CD4-positive, alpha-beta T cell (primary cell): ENCODE measurements at regions of chr19 and their contacts with region 1.

Region 1: DNA sequence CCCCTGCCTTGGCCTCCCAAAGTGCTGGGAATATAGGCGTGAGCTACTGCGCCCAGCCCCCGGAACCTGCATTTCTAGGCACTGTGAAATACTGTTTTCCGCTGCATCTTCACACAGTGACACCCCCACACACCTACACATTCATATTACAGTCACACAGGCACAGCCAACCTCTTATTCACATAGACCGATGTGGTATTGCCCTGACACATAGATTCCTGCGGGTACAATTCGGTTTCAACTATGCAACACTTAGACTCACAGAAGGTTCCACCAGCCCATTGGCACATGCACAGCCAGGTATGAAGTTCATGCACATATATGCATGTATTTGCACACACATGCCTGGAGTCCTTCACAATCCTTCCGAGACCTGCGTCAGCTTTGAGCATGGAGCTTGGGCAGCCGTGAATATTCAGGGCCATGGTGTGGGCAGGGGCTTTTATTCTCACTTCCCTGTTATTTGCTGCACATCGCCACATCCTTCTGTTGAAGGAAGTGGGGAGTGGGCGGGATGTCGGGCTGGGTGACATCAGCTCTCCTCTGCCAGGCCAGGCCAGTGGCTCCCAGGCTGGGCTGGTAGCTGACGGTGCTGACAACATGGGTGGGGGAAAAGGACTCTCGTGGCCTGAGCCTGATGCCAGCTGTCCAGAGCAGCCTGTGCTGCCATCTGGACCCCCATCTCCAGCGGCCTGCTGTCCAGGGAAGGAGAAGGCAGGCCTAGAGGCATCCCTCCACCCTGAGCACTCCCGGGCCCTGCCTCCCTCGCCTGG is 5.4 kb upstream of the CDC37 start:
- DNase-seq: peak in 7 of 14 experiments; percentile 38 to 89 (median 67)
- ATAC-seq: peak; percentile 42
- H3K4me3 ChIP-seq: peak overlapping the region; percentile 26
- H3K4me3 Mint-ChIP-seq: peak overlapping the region; percentile 76
- H3K27ac ChIP-seq: peak overlapping the region; percentile 36 to 37
- H3K27ac Mint-ChIP-seq: peak overlapping the region; percentile 85
- H3K4me1 ChIP-seq: peaks cover 80% of the 10 kb centered on the region
- H3K4me1 Mint-ChIP-seq: peaks cover 61% of the 10 kb centered on the region
- H3K27me3 ChIP-seq: no peaks in the 10 kb centered on the region
- H3K27me3 Mint-ChIP-seq: peaks cover 1% of the 10 kb centered on the region
- CTCF ChIP-seq: no peak

Region 2: GRCh38 chr19:9945319-9945966 is 463.3 kb before region 1 on chr19:
- CTCF ChIA-PET with region 1: no interaction called
- POLR2A ChIA-PET with region 1: no interaction called
- intact Hi-C with region 1: no loop called
- DNase-seq: no peak
- ATAC-seq: no peak
- H3K4me3 ChIP-seq: no peak overlapping the region
- H3K4me3 Mint-ChIP-seq: no peak overlapping the region
- H3K27ac ChIP-seq: no peak overlapping the region
- H3K27ac Mint-ChIP-seq: no peak overlapping the region
- H3K4me1 ChIP-seq: no peaks in the 10 kb centered on the region
- H3K4me1 Mint-ChIP-seq: no peaks in the 10 kb centered on the region
- H3K27me3 ChIP-seq: peaks cover 3 to 15% of the 10 kb centered on the region in 2 experiments
- H3K27me3 Mint-ChIP-seq: peaks cover 41% of the 10 kb centered on the region
- CTCF ChIP-seq: no peak

Region 3: GRCh38 chr19:10295305-10295846 is 113.3 kb before region 1 on chr19:
- CTCF ChIA-PET with region 1: no interaction called
- POLR2A ChIA-PET with region 1: no interaction called
- intact Hi-C with region 1: no loop called
- DNase-seq: peak; percentile 44 to 89 (median 64)
- ATAC-seq: peak; percentile 71
- H3K4me3 ChIP-seq: peak overlapping the region; percentile 57
- H3K4me3 Mint-ChIP-seq: peak overlapping the region; percentile 81
- H3K27ac ChIP-seq: no peak overlapping the region
- H3K27ac Mint-ChIP-seq: no peak overlapping the region
- H3K4me1 ChIP-seq: peaks cover 58% of the 10 kb centered on the region
- H3K4me1 Mint-ChIP-seq: peaks cover 38% of the 10 kb centered on the region
- H3K27me3 ChIP-seq: peaks cover 53 to 56% of the 10 kb centered on the region in 2 experiments
- H3K27me3 Mint-ChIP-seq: peaks cover 60% of the 10 kb centered on the region
- CTCF ChIP-seq: no peak

Region 4: GRCh38 chr19:10478903-10479384 is 70.2 kb after region 1 on chr19:
- CTCF ChIA-PET with region 1: interaction called, 6 read pairs
- POLR2A ChIA-PET with region 1: no interaction called
- intact Hi-C with region 1: loop called (anchors 2 to 5 kb)
- DNase-seq: peak; percentile 79 to 96 (median 88)
- ATAC-seq: peak; percentile 99
- H3K4me3 ChIP-seq: peak overlapping the region; percentile 40
- H3K4me3 Mint-ChIP-seq: peak overlapping the region; percentile 83
- H3K27ac ChIP-seq: peak overlapping the region in 1 of 2 donors; percentile 21
- H3K27ac Mint-ChIP-seq: peak overlapping the region; percentile 89
- H3K4me1 ChIP-seq: peaks cover 17% of the 10 kb centered on the region
- H3K4me1 Mint-ChIP-seq: peaks cover 9% of the 10 kb centered on the region
- H3K27me3 ChIP-seq: no peaks in the 10 kb centered on the region
- H3K27me3 Mint-ChIP-seq: no peaks in the 10 kb centered on the region
- CTCF ChIP-seq: peak; percentile 93

Region 5: GRCh38 chr19:10639836-10640235 is 231.1 kb after region 1 on chr19:
- CTCF ChIA-PET with region 1: no interaction called
- POLR2A ChIA-PET with region 1: no interaction called
- intact Hi-C with region 1: no loop called
- DNase-seq: no peak
- ATAC-seq: no peak
- H3K4me3 ChIP-seq: no peak overlapping the region
- H3K4me3 Mint-ChIP-seq: no peak overlapping the region
- H3K27ac ChIP-seq: no peak overlapping the region
- H3K27ac Mint-ChIP-seq: peak overlapping the region; percentile 39
- H3K4me1 ChIP-seq: peaks cover 28% of the 10 kb centered on the region
- H3K4me1 Mint-ChIP-seq: peaks cover 24% of the 10 kb centered on the region
- H3K27me3 ChIP-seq: no peaks in the 10 kb centered on the region
- H3K27me3 Mint-ChIP-seq: no peaks in the 10 kb centered on the region
- CTCF ChIP-seq: no peak